ENCODE measurements at regions of chr6 and their contacts with region 1.

Region 1: DNA sequence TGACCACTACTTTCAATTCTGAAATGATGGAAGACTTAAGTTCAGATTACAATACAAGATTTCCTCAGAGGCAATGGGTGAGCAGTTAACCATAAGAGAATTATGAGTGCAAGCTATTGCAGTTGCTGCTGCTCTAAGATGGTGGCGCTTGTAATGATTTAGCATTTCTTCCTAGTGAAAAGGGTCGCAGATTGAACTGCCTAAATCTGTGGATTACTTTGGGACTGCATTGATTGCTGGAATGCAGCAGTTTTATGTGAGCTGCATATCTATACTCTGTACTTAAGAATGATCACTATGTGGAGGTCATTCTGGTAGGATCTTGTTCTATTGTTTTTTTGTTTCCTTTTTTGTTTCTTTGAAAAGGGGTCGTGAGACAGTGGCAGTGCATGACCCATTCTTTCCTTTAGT is 5.3 kb downstream of the SCAF8 start:
- DNase-seq: no peak
- ATAC-seq: no peak
- H3K4me3 ChIP-seq: no peak overlapping the region
- H3K27ac ChIP-seq: peak overlapping the region; percentile 44
- H3K4me1 ChIP-seq: peaks cover 87% of the 10 kb centered on the region
- H3K27me3 ChIP-seq: no peaks in the 10 kb centered on the region
- CTCF ChIP-seq: no peak

Region 2: GRCh38 chr6:154569156-154569862 is 169.2 kb before region 1 on chr6:
- intact Hi-C with region 1: no loop called
- DNase-seq: no peak
- ATAC-seq: no peak
- H3K4me3 ChIP-seq: no peak overlapping the region
- H3K27ac ChIP-seq: no peak overlapping the region
- H3K4me1 ChIP-seq: no peaks in the 10 kb centered on the region
- H3K27me3 ChIP-seq: no peaks in the 10 kb centered on the region
- CTCF ChIP-seq: no peak

Region 3: GRCh38 chr6:154786132-154786868 is 47.7 kb after region 1 on chr6:
- intact Hi-C with region 1: loop called (anchors 5 kb)
- DNase-seq: no peak
- ATAC-seq: no peak
- H3K4me3 ChIP-seq: no peak overlapping the region
- H3K27ac ChIP-seq: no peak overlapping the region
- H3K4me1 ChIP-seq: peaks cover 3% of the 10 kb centered on the region
- H3K27me3 ChIP-seq: no peaks in the 10 kb centered on the region
- CTCF ChIP-seq: no peak

Measured in psoas muscle (tissue), 8 donors.